Activated CD4-positive, alpha-beta memory T cell treated with anti-CD3 and anti-CD28 coated beads for 36 hours (primary cell): ENCODE measurements at regions of chr4 and their contacts with region 1.

Region 1: GRCh38 chr4:109433205-109434006 is at the start of gene SEC24B:
- DNase-seq: peak; percentile 92
- H3K4me3 Mint-ChIP-seq: peak within 1 kb of the TSS; percentile 86
- H3K27ac Mint-ChIP-seq: peak within 1 kb of the TSS; percentile 85
- H3K4me1 Mint-ChIP-seq: peaks cover 67% of the 10 kb centered on the region
- H3K27me3 Mint-ChIP-seq: no peaks in the 10 kb centered on the region
- total RNA-seq, gene SEC24B: 24.7 to 25.2 TPM

Region 2: DNA sequence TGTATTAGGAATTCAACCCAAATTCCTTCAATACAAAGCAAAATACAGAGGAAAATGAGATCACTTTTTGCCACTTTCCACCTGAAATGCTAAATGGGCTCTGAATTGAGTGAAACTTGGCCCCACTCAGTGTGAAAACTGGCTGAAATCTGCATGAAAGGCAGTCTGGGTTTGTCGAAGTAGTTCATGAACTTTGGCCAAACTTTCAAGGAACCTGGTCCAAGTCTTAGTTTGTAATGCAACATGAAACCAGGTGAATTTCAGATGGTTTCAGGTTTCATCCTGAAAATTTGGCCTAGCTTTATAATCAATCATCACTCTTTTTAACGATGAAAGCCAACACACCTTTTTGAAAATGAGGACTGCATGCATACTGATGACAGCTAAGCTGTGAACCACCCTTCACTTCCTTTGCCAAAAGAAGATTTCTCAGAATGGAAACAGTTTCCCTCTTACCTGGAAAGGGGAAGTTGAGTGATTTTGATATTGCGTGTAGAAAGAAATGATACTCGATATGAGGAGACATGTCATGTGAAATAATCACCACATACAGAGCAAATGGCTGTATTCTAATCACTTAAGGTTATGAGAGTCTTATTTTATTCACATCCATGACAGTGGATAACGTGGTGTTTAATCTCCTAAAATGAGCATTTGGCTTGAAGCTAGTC is 460.7 kb before region 1 on chr4:
- CTCF ChIA-PET with region 1: no interaction called
- POLR2A ChIA-PET with region 1: no interaction called
- intact Hi-C with region 1: loop called (anchors 2 kb)
- DNase-seq: no peak
- H3K4me3 Mint-ChIP-seq: no peak overlapping the region
- H3K27ac Mint-ChIP-seq: peak overlapping the region; percentile 68
- H3K4me1 Mint-ChIP-seq: peaks cover 22% of the 10 kb centered on the region
- H3K27me3 Mint-ChIP-seq: no peaks in the 10 kb centered on the region

Region 3: GRCh38 chr4:109294006-109294405 is 139.4 kb before region 1 on chr4:
- CTCF ChIA-PET with region 1: no interaction called
- POLR2A ChIA-PET with region 1: no interaction called
- intact Hi-C with region 1: no loop called
- DNase-seq: peak; percentile 40
- H3K4me3 Mint-ChIP-seq: no peak overlapping the region
- H3K27ac Mint-ChIP-seq: no peak overlapping the region
- H3K4me1 Mint-ChIP-seq: no peaks in the 10 kb centered on the region
- H3K27me3 Mint-ChIP-seq: peaks cover 15% of the 10 kb centered on the region

Region 4: DNA sequence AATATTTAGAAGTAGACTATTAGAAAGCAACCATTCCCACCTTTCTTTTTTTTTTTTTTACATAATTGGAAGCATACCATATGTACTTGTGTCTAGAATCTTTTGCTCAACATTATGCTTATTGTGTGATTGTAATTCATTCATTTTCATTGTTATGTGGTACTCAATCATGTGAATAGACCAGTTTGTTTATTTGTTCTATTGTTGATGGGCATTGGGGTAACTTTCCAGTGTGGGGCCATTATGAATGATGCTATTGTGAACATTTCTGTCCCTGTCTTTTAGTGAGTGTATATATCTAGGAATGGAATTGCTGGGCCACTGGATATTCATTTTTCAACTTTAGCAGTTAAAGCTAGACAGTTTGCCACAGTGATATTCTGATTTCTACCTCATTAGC is 64.1 kb after region 1 on chr4:
- CTCF ChIA-PET with region 1: interaction called, 11 read pairs
- POLR2A ChIA-PET with region 1: no interaction called
- intact Hi-C with region 1: no loop called
- DNase-seq: no peak
- H3K4me3 Mint-ChIP-seq: no peak overlapping the region
- H3K27ac Mint-ChIP-seq: no peak overlapping the region
- H3K4me1 Mint-ChIP-seq: peaks cover 3% of the 10 kb centered on the region
- H3K27me3 Mint-ChIP-seq: no peaks in the 10 kb centered on the region

Region 5: GRCh38 chr4:109648266-109648996 is 215.0 kb after region 1 on chr4:
- CTCF ChIA-PET with region 1: no interaction called
- POLR2A ChIA-PET with region 1: no interaction called
- intact Hi-C with region 1: loop called (anchors 2 kb)
- DNase-seq: no peak
- H3K4me3 Mint-ChIP-seq: peak overlapping the region; percentile 41
- H3K27ac Mint-ChIP-seq: peak overlapping the region; percentile 76
- H3K4me1 Mint-ChIP-seq: peaks cover 42% of the 10 kb centered on the region
- H3K27me3 Mint-ChIP-seq: no peaks in the 10 kb centered on the region

Region 6: DNA sequence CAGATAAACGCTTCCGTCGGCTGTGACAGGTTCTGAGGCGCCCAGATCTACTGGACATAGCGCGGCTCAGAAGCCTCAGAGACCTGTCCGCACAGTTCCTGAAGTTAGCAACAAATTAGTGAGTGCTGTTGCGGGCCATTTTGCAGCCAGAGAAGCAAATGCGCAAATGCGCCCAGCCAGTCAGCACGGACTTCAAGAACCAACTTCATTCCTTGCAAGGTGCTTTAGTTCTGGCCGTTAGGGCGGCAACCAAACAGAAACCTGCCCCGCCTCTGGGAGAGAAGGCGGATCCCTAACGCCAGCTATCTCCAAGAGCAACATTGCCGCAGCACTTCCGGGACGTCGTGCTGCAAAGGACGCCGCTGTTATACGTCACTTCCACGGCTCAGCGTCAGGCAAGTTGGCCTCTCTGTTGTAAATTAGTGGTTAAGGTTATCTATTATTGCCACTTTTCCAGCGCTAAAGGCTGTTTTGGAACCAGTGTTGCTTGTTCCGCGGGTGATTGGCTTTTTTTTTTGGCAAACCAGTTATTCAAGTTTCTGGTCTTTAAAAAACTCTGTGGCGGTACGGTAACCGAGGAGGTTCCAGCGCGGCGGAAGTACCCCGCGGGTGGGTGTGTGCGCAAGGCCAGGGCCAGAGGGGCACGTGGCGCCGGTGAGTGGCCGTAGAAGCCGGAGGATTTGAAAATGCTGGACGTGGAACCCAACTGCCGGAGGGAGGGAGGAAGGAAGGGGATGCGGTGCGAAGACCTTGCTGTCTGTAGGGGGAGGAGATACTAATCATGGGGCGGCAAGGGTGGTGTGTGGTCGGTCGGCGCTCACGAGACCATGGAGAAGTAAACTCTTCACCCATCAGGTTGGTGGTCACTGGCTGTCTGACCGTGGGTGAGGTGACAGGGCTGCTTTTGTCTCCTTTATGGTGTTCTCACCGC is 382.0 kb after region 1 on chr4 and contains the start of gene GAR1:
- CTCF ChIA-PET with region 1: interaction called, 8 read pairs
- POLR2A ChIA-PET with region 1: interaction called, 4 read pairs
- intact Hi-C with region 1: loop called (anchors 1 kb)
- DNase-seq: peak; percentile 94
- H3K4me3 Mint-ChIP-seq: peak within 1 kb of the TSS; percentile 99
- H3K27ac Mint-ChIP-seq: peak within 1 kb of the TSS; percentile 96
- H3K4me1 Mint-ChIP-seq: peaks cover 39% of the 10 kb centered on the region
- H3K27me3 Mint-ChIP-seq: no peaks in the 10 kb centered on the region
- total RNA-seq, gene GAR1: 30.5 to 32.8 TPM

Region 7: DNA sequence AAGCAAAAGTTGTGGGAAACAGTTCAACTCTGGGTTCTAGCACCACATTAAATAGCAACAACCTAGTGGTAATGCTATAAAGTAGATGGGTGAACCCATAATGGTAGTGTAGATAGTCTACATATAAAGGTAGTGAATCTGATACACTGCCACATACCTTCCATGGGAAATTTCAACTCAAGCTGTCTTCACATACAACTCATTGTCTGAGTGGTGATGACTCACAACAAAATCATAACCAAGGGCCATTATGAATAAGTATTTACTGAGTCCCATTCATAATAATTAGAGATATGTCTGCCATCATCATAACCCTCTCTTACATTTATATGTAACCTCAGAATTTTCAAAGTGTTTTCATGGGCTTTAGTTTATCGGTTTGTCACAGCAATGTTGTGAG is 514.1 kb after region 1 on chr4:
- CTCF ChIA-PET with region 1: no interaction called
- POLR2A ChIA-PET with region 1: interaction called, 3 read pairs
- intact Hi-C with region 1: loop called (anchors 1 kb)
- DNase-seq: no peak
- H3K4me3 Mint-ChIP-seq: no peak overlapping the region
- H3K27ac Mint-ChIP-seq: peak overlapping the region; percentile 64
- H3K4me1 Mint-ChIP-seq: peaks cover 37% of the 10 kb centered on the region
- H3K27me3 Mint-ChIP-seq: peaks cover 4% of the 10 kb centered on the region

Region 8: DNA sequence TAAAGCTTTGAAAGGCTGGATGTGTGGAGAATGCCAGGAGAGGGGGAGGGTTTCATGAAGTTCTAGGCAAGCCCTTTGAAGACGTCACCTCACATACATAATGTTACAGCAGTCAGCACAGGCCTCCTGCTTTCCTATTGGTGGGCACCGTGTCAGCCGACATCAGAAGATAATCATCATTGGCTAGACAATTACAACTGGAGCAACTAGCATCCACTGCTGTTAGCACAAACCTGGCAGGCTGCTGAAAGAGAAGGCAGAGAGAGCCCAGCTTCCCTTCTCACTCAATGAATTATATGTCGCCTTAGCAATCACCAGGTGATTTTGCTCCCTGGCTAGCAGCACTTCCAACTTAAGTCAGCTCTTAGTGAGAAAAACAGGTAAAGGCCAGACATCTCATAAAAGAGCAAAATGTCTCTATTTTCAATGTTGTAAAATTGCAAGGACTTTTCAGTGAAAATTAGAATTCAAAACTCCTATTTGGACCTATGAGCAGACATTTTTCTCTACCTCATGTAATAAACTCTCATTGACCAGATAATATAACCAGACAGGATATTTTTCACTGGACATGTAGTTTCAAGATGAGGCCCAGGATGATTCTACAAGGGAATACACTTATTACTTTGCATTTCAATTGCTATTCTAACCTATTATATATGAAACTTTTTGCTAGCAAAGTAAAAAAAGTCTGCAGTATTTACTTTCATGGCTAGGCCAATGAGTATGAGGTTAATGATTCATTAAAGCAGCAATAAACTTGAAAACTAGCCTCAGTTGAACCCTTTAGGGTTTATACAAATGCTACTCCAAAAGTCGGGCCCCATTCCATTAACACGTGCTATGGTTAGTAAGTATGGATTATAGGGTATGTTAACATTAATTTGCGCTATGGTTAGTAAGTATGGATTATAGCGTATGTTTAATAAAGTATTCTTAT is 760.7 kb after region 1 on chr4:
- CTCF ChIA-PET with region 1: no interaction called
- POLR2A ChIA-PET with region 1: interaction called, 3 read pairs
- intact Hi-C with region 1: loop called (anchors 10 kb)
- DNase-seq: peak; percentile 89
- H3K4me3 Mint-ChIP-seq: peak overlapping the region; percentile 59
- H3K27ac Mint-ChIP-seq: peak overlapping the region; percentile 93
- H3K4me1 Mint-ChIP-seq: peaks cover 20% of the 10 kb centered on the region
- H3K27me3 Mint-ChIP-seq: no peaks in the 10 kb centered on the region